ENCODE measurements at regions of chr20 and their contacts with region 1.

Region 1: DNA sequence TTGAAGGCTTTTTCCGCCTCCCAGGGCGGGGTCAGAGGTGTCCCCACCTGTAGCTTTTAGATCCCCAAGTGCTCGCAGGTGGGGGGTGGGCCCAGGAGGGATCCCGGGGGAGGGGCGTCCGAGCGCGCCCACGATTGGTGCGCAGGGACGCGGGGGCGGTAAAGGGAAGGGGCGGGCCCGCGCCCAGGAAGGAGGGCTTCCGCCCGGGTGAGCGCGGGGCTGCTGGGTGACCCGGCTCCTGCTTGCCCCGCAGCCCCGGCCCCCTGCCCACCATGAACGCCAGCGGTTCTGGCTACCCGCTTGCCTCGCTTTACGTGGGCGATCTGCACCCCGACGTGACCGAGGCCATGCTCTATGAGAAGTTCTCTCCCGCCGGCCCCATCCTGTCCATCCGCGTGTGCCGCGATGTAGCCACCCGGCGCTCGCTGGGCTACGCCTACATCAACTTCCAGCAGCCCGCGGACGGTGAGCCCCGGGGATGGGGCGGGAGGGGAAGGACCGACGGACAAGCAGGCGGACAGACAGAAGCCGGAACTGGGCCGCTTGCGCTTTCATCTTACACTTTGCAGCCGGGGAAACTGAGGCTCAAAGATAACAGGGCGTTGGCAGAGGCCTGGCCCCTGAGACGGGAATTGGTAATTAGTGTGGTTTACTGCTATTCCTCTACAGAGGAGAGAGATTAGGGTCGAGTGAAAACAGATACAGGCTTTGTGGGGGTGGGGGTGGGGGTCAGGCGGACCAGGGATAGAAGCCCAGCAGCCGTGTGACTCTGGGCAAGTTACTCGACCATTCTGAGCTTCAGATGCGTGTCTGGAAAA is at the start of gene PABPC1L:
- DNase-seq: peak; percentile 33 to 88 (median 74)
- ATAC-seq: peak; percentile 95
- H3K4me3 ChIP-seq: peak within 1 kb of the TSS; percentile 86
- H3K4me3 Mint-ChIP-seq: peak within 1 kb of the TSS; percentile 85
- H3K27ac ChIP-seq: peak within 1 kb of the TSS in 1 of 2 donors; percentile 17
- H3K27ac Mint-ChIP-seq: peak within 1 kb of the TSS; percentile 68
- H3K4me1 ChIP-seq: peaks cover 22% of the 10 kb centered on the region
- H3K4me1 Mint-ChIP-seq: peaks cover 36% of the 10 kb centered on the region
- H3K27me3 ChIP-seq: no peaks in the 10 kb centered on the region
- H3K27me3 Mint-ChIP-seq: no peaks in the 10 kb centered on the region
- CTCF ChIP-seq: no peak
- total RNA-seq, gene PABPC1L: 22.8 to 27.5 TPM

Region 2: DNA sequence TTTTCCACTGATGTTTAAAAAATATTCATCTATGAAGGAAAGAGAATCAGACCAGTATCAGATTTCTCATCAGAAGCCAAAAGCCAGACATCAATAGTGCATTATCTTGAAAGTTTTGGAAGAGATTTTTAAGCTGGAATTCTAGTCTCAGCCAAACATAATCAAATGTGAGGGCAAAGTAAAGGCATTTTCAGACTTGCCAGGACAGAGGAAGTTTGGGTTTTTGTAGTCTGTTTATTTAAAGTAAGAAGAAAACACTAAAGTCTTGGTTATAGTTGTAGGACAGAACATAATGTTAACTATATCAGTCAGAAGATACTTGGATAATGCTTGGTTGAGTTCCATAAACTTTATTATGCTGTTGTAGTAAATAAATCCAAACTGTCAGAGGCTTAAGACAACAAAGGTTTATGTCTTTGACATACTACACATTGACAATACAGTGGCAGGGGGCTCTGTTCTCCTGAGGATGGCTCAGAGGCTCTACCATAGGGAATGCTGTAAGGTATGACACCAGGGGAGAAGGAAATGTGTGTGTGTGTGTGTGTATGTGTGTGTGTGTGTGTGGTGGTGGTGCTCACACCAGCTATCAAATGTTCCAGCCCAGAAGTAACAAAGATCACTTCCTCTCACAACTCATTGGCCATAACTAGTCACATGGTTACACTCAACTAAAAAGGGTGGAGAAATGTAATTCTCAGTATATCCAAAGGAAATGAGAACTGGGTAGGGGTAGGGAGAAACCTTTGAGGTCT is 51.3 kb before region 1 on chr20:
- CTCF ChIA-PET with region 1: no interaction called
- POLR2A ChIA-PET with region 1: no interaction called
- intact Hi-C with region 1: no loop called
- DNase-seq: peak in 2 of 14 experiments; percentile 5 to 22
- ATAC-seq: no peak
- H3K4me3 ChIP-seq: no peak overlapping the region
- H3K4me3 Mint-ChIP-seq: no peak overlapping the region
- H3K27ac ChIP-seq: no peak overlapping the region
- H3K27ac Mint-ChIP-seq: no peak overlapping the region
- H3K4me1 ChIP-seq: no peaks in the 10 kb centered on the region
- H3K4me1 Mint-ChIP-seq: peaks cover 5% of the 10 kb centered on the region
- H3K27me3 ChIP-seq: no peaks in the 10 kb centered on the region
- H3K27me3 Mint-ChIP-seq: no peaks in the 10 kb centered on the region
- CTCF ChIP-seq: no peak

Region 3: DNA sequence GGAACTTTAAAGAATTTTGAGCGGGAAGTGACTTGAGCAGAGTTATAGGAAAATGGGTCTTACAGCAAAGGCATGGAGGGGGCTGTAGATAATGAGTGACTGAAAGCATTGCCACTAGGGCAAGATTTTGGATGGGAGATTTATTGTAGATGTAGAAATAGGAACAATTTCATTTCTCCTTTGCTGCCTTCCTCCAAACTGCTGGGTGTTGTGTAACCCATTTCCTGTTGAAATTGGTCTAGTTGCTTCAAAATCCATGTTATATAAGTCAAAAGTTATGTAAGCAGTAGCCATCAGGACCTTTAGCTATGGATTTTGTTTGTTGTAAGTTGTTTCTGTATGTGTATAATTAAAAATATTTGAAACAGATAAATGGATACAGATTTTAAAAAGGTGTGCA is 13.5 kb before region 1 on chr20:
- CTCF ChIA-PET with region 1: interaction called, 4 read pairs
- POLR2A ChIA-PET with region 1: interaction called, 10 read pairs
- intact Hi-C with region 1: no loop called
- DNase-seq: peak in 2 of 14 experiments; percentile 35 to 43
- ATAC-seq: no peak
- H3K4me3 ChIP-seq: no peak overlapping the region
- H3K4me3 Mint-ChIP-seq: peak overlapping the region; percentile 12
- H3K27ac ChIP-seq: peak overlapping the region in 1 of 2 donors; percentile 35
- H3K27ac Mint-ChIP-seq: peak overlapping the region; percentile 50
- H3K4me1 ChIP-seq: peaks cover 57% of the 10 kb centered on the region
- H3K4me1 Mint-ChIP-seq: peaks cover 86% of the 10 kb centered on the region
- H3K27me3 ChIP-seq: no peaks in the 10 kb centered on the region
- H3K27me3 Mint-ChIP-seq: no peaks in the 10 kb centered on the region
- CTCF ChIP-seq: no peak

Region 4: GRCh38 chr20:45090481-45090880 is 180.4 kb after region 1 on chr20:
- CTCF ChIA-PET with region 1: no interaction called
- POLR2A ChIA-PET with region 1: interaction called, 4 read pairs
- intact Hi-C with region 1: loop called in 1 of 2 experiments (anchors 5 kb)
- DNase-seq: no peak
- ATAC-seq: no peak
- H3K4me3 ChIP-seq: no peak overlapping the region
- H3K4me3 Mint-ChIP-seq: no peak overlapping the region
- H3K27ac ChIP-seq: no peak overlapping the region
- H3K27ac Mint-ChIP-seq: no peak overlapping the region
- H3K4me1 ChIP-seq: no peaks in the 10 kb centered on the region
- H3K4me1 Mint-ChIP-seq: peaks cover 11% of the 10 kb centered on the region
- H3K27me3 ChIP-seq: no peaks in the 10 kb centered on the region
- H3K27me3 Mint-ChIP-seq: no peaks in the 10 kb centered on the region
- CTCF ChIP-seq: no peak

Region 5: DNA sequence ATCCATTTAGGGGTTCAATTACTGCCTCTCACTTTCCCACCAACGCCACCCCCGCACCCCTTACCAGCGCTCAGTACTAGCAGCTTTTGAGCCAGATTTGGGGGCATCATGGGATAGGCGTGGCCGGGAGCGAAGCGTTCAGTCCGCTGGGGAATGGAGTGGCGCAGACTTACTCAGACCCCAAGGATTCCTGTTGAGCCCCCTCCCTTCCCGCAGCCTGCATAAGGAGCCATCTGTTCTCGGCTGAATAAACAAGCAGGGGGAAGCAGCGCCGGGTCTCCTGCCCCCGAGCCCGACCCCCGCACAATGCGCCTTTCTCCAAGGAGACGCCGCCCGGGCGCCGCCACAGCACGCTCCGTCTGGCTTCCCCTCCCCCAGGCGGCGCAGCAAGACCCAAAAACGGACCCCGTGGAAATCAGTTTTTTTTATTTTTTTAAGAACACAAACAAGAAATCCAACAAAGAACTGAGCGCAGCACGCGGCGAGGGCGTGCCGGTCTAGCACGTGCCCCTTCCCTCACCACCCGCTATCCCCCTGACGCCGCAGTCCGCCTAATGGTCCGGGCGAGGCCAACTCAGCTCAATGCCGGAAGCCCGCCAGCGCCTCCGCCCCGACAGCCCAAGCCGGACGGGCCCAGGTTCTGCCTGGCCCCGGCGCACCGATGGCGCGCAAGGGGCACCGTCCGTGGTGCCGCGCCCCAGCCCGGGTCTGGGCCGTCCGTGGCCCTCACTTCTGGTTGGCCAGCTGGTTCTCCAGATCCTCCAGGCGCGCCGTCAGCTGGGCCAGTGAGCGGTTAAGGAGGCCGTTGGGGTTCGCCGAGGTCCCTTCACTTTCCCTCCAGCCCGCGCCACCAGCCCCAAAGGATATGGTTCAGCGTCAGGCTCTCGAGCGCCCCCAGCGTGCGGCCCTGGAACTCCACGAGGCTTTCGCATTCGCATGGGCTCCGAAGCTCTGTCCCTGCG is 383.2 kb after region 1 on chr20:
- CTCF ChIA-PET with region 1: no interaction called
- POLR2A ChIA-PET with region 1: no interaction called
- intact Hi-C with region 1: loop called in 1 of 2 experiments (anchors 2 kb)
- DNase-seq: peak; percentile 63 to 84 (median 74)
- ATAC-seq: peak; percentile 92
- H3K4me3 ChIP-seq: peak overlapping the region; percentile 40
- H3K4me3 Mint-ChIP-seq: peak overlapping the region; percentile 82
- H3K27ac ChIP-seq: no peak overlapping the region
- H3K27ac Mint-ChIP-seq: no peak overlapping the region
- H3K4me1 ChIP-seq: peaks cover 17% of the 10 kb centered on the region
- H3K4me1 Mint-ChIP-seq: no peaks in the 10 kb centered on the region
- H3K27me3 ChIP-seq: peaks cover 15 to 23% of the 10 kb centered on the region in 2 experiments
- H3K27me3 Mint-ChIP-seq: peaks cover 66% of the 10 kb centered on the region
- CTCF ChIP-seq: peak; percentile 95